Activated naive CD4-positive, alpha-beta T cell treated with anti-CD3 and anti-CD28 coated beads for 36 hours (primary cell): ENCODE measurements at regions of chr13 and their contacts with region 1.

Region 1: DNA sequence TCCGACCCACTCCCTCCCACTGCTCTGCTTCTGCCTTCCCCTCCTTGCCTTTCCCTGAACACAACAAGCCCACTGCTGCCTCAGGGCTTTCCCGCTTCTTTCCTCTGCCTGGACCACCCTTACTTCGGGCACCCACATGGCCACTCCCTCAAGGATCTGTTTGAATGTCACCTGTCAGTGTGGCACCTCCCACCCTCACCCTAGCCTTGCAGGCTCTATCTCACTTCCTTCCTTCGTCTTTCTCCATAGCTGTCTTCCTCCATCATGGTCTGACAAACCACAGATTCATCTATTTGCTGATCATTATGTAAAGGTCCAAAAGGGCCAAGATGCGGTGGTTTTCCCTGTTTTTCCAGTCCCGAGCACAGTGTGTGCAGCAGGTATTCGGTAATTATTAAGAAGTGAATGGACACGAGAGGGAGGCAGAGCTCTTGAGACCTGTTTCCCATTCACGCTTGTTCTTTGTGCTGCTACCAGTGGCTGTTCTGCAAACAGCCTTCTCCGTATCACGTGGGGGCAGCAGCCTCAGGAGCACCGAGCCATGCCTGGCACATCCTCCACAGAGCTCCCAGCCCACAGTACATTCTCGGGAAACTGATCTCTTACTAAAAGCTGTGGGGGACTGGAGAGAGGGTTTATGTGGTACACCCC is 50.2 kb downstream of the CCDC70 start:
- DNase-seq: no peak
- H3K4me3 Mint-ChIP-seq: no peak overlapping the region
- H3K27ac Mint-ChIP-seq: no peak overlapping the region
- H3K4me1 Mint-ChIP-seq: peaks cover 29% of the 10 kb centered on the region
- H3K27me3 Mint-ChIP-seq: peaks cover 6% of the 10 kb centered on the region

Region 2: GRCh38 chr13:51416107-51416506 is 495.9 kb before region 1 on chr13:
- CTCF ChIA-PET with region 1: no interaction called
- intact Hi-C with region 1: loop called (anchors 2 kb)
- DNase-seq: no peak
- H3K4me3 Mint-ChIP-seq: no peak overlapping the region
- H3K27ac Mint-ChIP-seq: peak overlapping the region; percentile 62
- H3K4me1 Mint-ChIP-seq: peaks cover 63% of the 10 kb centered on the region
- H3K27me3 Mint-ChIP-seq: no peaks in the 10 kb centered on the region

Region 3: DNA sequence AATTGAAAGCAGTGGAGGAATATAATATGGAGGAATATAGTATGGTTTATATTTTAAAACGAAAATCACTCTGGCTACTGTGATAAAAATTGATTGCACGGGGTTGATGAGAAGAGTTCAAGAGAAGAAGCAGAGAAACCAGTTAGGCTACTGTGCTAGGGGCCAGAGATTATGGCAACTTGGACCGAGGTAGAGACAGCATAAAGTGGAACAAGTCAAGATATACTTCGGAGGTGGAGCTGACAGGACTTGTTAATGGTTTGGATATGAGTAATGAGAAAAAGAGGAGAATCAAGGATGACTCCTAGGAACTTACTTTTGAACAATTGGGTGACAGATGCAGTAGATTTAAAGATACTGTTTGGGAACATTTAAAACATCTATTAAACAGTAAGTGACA is 334.3 kb before region 1 on chr13:
- CTCF ChIA-PET with region 1: no interaction called
- intact Hi-C with region 1: no loop called
- DNase-seq: no peak
- H3K4me3 Mint-ChIP-seq: no peak overlapping the region
- H3K27ac Mint-ChIP-seq: no peak overlapping the region
- H3K4me1 Mint-ChIP-seq: no peaks in the 10 kb centered on the region
- H3K27me3 Mint-ChIP-seq: no peaks in the 10 kb centered on the region

Region 4: GRCh38 chr13:51895906-51896888 is 15.8 kb before region 1 on chr13:
- CTCF ChIA-PET with region 1: interaction called, 10 read pairs
- intact Hi-C with region 1: no loop called
- DNase-seq: peak; percentile 69
- H3K4me3 Mint-ChIP-seq: no peak overlapping the region
- H3K27ac Mint-ChIP-seq: no peak overlapping the region
- H3K4me1 Mint-ChIP-seq: no peaks in the 10 kb centered on the region
- H3K27me3 Mint-ChIP-seq: peaks cover 2% of the 10 kb centered on the region